Endothelial cell of umbilical vein (primary cell): ENCODE measurements at regions of chr9 and their contacts with region 1.

Region 1: DNA sequence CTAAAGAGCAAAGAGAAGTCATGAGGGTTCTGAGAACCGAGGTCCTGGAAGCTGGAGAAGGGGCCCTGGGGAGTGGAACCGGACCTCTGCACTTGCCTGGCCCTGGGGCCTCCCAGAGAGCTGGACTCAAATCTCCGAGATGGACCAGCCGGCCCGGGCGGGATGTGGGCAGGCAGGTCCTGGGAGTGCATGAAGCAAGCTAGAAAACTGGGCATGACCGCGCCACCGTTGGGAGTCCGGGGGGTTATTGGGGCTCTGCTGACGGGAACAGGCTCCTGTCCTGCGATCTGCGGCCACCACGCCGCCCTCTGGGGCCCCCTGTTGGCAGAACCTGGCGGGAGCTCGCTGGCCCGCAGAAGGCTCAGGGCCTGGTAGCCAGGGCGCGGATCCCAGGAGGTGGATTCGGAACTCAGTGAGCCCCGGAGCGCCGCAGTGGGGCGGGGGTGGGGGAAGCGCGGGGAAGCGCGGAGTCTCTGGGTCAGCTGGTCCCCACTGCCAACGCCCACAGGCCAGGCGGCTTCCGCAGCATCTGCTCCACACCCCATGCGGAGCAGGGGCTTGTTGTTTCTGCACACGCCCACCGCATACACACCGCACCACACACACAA is 150.6 kb downstream of the ERCC6L2 start:
- DNase-seq: no peak
- H3K4me3 ChIP-seq: no peak overlapping the region
- H3K27ac ChIP-seq: no peak overlapping the region
- H3K4me1 ChIP-seq: peaks cover 4% of the 10 kb centered on the region
- H3K27me3 ChIP-seq: peaks cover 34 to 40% of the 10 kb centered on the region in 2 experiments
- CTCF ChIP-seq: peak; percentile 11 to 30
- POLR2A ChIP-seq: no peak

Region 2: DNA sequence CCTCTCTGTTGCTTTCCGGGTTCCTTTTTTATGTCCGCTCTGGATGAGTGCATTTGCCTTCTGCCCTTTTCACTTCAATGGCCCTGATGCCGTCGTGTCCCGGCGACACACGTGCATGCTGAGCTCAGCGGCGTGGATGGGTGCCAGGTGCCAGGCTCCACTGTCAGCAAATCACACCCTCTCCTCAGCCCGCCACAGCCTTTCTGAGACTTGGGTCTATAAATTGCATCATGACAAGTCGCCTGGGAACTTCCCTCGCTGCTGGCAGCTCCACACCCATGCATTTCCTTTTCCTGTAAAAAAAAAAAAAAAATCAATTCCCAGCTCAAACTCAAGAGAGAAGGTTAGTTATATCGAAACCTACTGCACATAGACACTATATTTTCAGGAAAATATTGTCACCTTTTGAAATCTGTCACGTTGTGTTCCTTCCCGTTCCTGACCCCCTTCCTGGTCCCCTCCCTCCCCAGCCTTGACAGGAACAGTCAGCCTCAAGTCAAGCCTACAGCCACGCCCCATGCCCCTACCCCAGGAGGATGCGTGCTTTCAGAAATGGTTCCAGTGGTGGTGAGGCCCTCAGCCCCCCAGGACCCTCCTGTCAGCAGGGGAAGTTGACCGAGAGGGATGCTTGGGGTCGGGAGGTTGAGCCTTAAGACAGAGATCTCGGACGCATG is 399.1 kb before region 1 on chr9:
- CTCF ChIA-PET with region 1: no interaction called
- POLR2A ChIA-PET with region 1: no interaction called
- dilution Hi-C with region 1: no loop called
- intact Hi-C with region 1: loop called (anchors 5 kb)
- DNase-seq: peak; percentile 71
- H3K4me3 ChIP-seq: peak overlapping the region in 1 of 3 experiments; percentile 18
- H3K27ac ChIP-seq: peak overlapping the region; percentile 82
- H3K4me1 ChIP-seq: peaks cover 23% of the 10 kb centered on the region
- H3K27me3 ChIP-seq: no peaks in the 10 kb centered on the region
- CTCF ChIP-seq: no peak
- POLR2A ChIP-seq: no peak